Activated CD4-positive, alpha-beta memory T cell treated with anti-CD3 and anti-CD28 coated beads, Interleukin-2, amount 10 ng/mL, durations not matched to agents 7 days and 5 days (primary cell): ENCODE measurements at regions of chr3 and their contacts with region 1.

Region 1: GRCh38 chr3:51637941-51638471 is 33.0 kb upstream of the TEX264 start:
- DNase-seq: peak; percentile 46
- H3K4me3 Mint-ChIP-seq: no peak overlapping the region
- H3K27ac Mint-ChIP-seq: no peak overlapping the region
- H3K4me1 Mint-ChIP-seq: no peaks in the 10 kb centered on the region
- H3K27me3 Mint-ChIP-seq: no peaks in the 10 kb centered on the region

Region 2: GRCh38 chr3:51670823-51671733 is 33.1 kb after region 1 on chr3 and contains the start of gene TEX264:
- CTCF ChIA-PET with region 1: interaction called, 44 read pairs
- POLR2A ChIA-PET with region 1: no interaction called
- DNase-seq: peak; percentile 95
- H3K4me3 Mint-ChIP-seq: peak within 1 kb of the TSS; percentile 93
- H3K27ac Mint-ChIP-seq: peak within 1 kb of the TSS; percentile 87
- H3K4me1 Mint-ChIP-seq: peaks cover 66% of the 10 kb centered on the region
- H3K27me3 Mint-ChIP-seq: no peaks in the 10 kb centered on the region
- total RNA-seq, gene TEX264: 103 to 108 TPM